Naive thymus-derived CD8-positive, alpha-beta T cell (primary cell): ENCODE measurements at regions of chr12 and their contacts with region 1.

Region 1: GRCh38 chr12:44812062-44812461 is 64.1 kb downstream of the NELL2 start:
- DNase-seq: peak in 9 of 10 donors; percentile 27 to 77 (median 69)
- ATAC-seq: peak; percentile 79 to 89
- H3K4me3 Mint-ChIP-seq: peak overlapping the region in 7 of 10 donors; percentile 10 to 66 (median 51)
- H3K27ac Mint-ChIP-seq: peak overlapping the region; percentile 59 to 90 (median 82)
- H3K4me1 Mint-ChIP-seq: peaks cover 34 to 69% (median 63%) of the 10 kb centered on the region in 4 donors
- H3K27me3 Mint-ChIP-seq: no peaks in the 10 kb centered on the region

Region 2: DNA sequence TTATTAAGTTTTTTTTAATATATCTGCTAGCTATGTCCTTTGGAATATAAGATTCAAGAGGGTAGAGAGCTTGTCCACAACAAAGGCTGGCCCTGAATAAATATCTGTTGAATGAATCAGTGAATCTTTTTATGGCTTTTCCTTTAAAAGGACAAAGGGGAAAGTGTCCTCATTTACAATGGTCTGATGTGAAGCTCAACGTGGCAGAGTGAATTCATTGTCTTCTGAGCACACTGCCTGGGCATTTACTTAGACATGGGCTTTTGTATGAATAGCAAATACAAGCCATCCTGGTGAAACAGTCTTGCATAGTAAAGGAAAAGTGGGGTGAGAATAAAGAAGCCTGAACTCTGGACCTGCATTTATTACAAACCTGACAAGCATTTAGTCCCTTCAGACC is 137.2 kb before region 1 on chr12:
- POLR2A ChIA-PET with region 1: no interaction called
- DNase-seq: no peak
- ATAC-seq: no peak
- H3K4me3 Mint-ChIP-seq: no peak overlapping the region
- H3K27ac Mint-ChIP-seq: peak overlapping the region in 1 of 10 donors; percentile 49
- H3K4me1 Mint-ChIP-seq: peaks cover 0 to 12% (median 8%) of the 10 kb centered on the region in 4 donors
- H3K27me3 Mint-ChIP-seq: no peaks in the 10 kb centered on the region

Region 3: DNA sequence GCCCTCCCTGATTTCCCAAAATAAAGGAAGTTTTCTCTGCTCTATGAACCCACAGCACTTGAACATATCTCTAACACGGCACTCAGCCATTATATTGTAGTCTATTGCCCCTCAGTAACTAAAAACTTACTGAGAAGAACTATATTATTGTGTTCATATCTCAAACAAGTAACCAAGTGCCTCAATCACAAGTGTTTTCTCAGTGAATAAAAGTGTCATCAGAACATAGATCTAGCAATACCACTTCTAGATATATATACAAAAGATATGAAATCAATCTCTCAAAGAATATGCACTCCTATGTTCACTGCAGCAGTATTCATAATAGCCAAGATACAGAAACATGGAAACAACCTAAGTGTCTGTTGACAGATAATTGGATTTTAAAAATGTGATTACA is 74.0 kb before region 1 on chr12:
- POLR2A ChIA-PET with region 1: interaction called, 11 read pairs
- DNase-seq: no peak
- ATAC-seq: no peak
- H3K4me3 Mint-ChIP-seq: no peak overlapping the region
- H3K27ac Mint-ChIP-seq: peak overlapping the region in 2 of 10 donors; percentile 45 to 83
- H3K4me1 Mint-ChIP-seq: peaks cover 0 to 15% (median 12%) of the 10 kb centered on the region in 4 donors
- H3K27me3 Mint-ChIP-seq: no peaks in the 10 kb centered on the region

Region 4: GRCh38 chr12:44827832-44828438 is 15.9 kb after region 1 on chr12:
- POLR2A ChIA-PET with region 1: interaction called, 10 read pairs
- DNase-seq: peak in 4 of 10 donors; percentile 34 to 88 (median 76)
- ATAC-seq: peak; percentile 83 to 93
- H3K4me3 Mint-ChIP-seq: peak overlapping the region; percentile 55 to 87 (median 77)
- H3K27ac Mint-ChIP-seq: peak overlapping the region; percentile 92 to 97 (median 96)
- H3K4me1 Mint-ChIP-seq: peaks cover 30 to 74% (median 65%) of the 10 kb centered on the region in 4 donors
- H3K27me3 Mint-ChIP-seq: no peaks in the 10 kb centered on the region